ENCODE measurements at regions of chr17 and their contacts with region 1.

Region 1: GRCh38 chr17:56779898-56780733 is 53.6 kb downstream of the C17orf67 start:
- DNase-seq: peak; percentile 69
- ATAC-seq: peak; percentile 99
- H3K4me3 ChIP-seq: peak overlapping the region; percentile 31 to 49
- H3K27ac ChIP-seq: no peak overlapping the region
- H3K4me1 ChIP-seq: peaks cover 8 to 16% of the 10 kb centered on the region in 2 experiments; a peak in 3 of 4 replicates
- H3K27me3 ChIP-seq: peaks cover 5% of the 10 kb centered on the region; the same call in 1 of the 2 replicates
- CTCF ChIP-seq: peak; percentile 91 to 99 (median 99)
- POLR2A ChIP-seq: no peak
- RAD21 ChIP-seq: peak; percentile 98

Region 2: DNA sequence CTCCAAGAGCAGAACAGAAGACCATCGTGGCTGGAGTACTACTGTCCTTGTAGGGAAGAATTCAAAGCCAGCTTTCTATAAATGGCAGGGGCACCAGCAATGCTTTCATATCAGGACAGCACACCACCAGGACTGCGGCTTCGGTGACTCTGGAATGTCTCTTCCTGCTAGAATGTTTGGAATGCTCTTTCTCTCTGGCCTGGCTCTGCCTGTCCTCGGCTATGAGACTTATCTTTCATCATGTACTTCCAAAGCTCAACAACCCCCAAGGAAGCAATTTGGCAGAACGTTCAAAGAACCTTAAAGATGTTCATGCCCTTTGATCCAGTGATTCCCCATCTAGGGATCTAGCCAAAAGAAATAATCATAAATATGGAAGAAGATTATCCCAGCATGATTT is 239.3 kb before region 1 on chr17:
- CTCF ChIA-PET with region 1: no interaction called
- POLR2A ChIA-PET with region 1: no interaction called
- RAD21 ChIA-PET with region 1: no interaction called
- intact Hi-C with region 1: no loop called
- DNase-seq: no peak
- ATAC-seq: no peak
- H3K4me3 ChIP-seq: no peak overlapping the region
- H3K27ac ChIP-seq: no peak overlapping the region
- H3K4me1 ChIP-seq: no peaks in the 10 kb centered on the region
- H3K27me3 ChIP-seq: peaks cover 39% of the 10 kb centered on the region
- CTCF ChIP-seq: no peak
- POLR2A ChIP-seq: no peak
- RAD21 ChIP-seq: no peak

Region 3: GRCh38 chr17:56623383-56623782 is 156.7 kb before region 1 on chr17:
- CTCF ChIA-PET with region 1: no interaction called
- POLR2A ChIA-PET with region 1: no interaction called
- RAD21 ChIA-PET with region 1: no interaction called
- intact Hi-C with region 1: no loop called
- DNase-seq: no peak
- ATAC-seq: no peak
- H3K4me3 ChIP-seq: no peak overlapping the region
- H3K27ac ChIP-seq: no peak overlapping the region
- H3K4me1 ChIP-seq: no peaks in the 10 kb centered on the region
- H3K27me3 ChIP-seq: peaks cover 3% of the 10 kb centered on the region; the same call in 1 of the 2 replicates
- CTCF ChIP-seq: no peak
- POLR2A ChIP-seq: no peak
- RAD21 ChIP-seq: no peak

Region 4: DNA sequence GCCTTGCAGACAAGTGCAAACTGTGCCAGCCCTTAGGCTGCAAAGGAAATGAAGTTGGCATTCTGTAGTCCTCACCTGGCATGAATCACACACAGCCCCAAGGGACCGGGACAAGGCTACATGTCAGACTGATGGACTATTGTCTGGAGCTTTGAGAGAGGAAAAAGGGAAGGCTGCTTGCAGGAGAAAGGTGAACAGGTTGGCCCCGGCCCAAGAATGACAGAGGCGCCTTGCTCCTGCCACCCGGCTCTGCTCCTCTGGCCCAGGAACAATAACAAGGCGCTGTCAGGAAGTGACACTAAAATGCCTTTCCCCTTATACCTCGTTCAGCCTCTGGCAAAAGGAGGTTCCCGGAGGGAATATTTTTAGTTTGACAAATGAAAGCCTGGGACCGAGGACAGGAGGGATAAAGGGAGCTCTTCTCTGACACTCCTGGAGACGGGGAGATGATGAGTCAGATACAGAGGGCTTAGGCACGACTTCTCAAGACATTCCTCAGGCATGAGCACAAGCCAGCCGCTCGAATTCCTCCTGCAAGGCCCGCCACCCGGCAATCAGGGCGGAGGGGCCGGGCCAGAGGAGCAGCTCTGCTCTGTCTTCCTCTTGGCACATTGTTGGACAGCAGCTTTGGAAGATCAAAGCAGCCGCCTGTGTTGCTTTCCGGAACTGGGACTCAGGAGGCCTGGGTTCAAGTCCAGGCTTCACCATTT is 80.8 kb before region 1 on chr17:
- CTCF ChIA-PET with region 1: no interaction called
- POLR2A ChIA-PET with region 1: no interaction called
- RAD21 ChIA-PET with region 1: interaction called in 1 of 2 experiments, 3 read pairs
- intact Hi-C with region 1: loop called (anchors 5 kb)
- DNase-seq: peak; percentile 98
- ATAC-seq: peak; percentile 97
- H3K4me3 ChIP-seq: peak overlapping the region; percentile 11 to 15
- H3K27ac ChIP-seq: peak overlapping the region; percentile 45
- H3K4me1 ChIP-seq: peaks cover 25 to 31% of the 10 kb centered on the region in 2 experiments
- H3K27me3 ChIP-seq: no peaks in the 10 kb centered on the region
- CTCF ChIP-seq: no peak
- POLR2A ChIP-seq: no peak
- RAD21 ChIP-seq: 0 out of 2 replicates have a peak, but pooled peaks have one; percentile 21

Measured in HCT116 (cell line).